HEK293 (cell line): ENCODE measurements at regions of chr16 and their contacts with region 1.

Region 1: DNA sequence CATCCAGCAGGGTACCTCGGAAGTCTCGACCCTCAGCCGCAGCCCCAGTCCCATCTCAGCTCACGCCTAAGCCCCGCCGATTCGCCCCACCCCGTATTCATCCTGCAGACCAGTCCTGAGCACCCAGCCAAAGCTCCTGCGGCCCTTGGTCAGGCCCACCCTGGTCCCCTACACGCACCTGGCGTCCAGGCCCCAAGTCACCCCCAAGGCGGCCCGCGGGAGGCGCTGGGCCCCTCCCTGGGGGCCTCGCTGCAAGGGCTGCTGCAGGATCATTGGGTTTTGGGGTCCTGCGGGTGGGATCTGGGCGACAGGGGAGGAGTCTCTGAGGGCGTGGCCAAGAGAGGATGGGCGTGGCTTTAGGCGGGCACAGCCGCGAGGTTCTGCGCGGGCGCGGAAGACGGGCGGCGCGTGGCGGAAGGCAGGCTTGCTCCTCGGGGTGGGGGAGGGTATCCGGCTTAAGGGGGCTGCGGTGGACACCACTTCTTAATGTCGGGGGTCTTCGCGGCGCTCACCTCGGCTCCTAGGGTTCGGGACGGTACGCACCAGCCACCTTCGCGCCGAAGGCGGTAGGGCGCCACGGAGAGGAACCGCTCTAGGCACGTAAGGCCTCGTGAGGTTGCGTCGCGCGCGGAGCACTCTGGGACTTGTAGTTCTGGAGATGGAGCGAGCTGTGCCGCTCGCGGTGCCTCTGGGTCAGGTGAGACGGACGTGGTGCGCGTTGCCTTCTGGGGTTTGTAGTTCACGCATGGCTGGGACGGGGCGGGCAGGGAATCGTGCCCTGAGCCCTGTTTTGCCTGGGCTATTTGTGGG is at the starts of genes HCFC1R1 and THOC6:
- H3K4me3 ChIP-seq: peak within 1 kb of the TSS; percentile 72
- H3K27ac ChIP-seq: peak within 1 kb of the TSS; percentile 85
- H3K4me1 ChIP-seq: peaks cover 27% of the 10 kb centered on the region
- CTCF ChIP-seq: no peak; the same call in 1 of the 2 replicates

Region 2: DNA sequence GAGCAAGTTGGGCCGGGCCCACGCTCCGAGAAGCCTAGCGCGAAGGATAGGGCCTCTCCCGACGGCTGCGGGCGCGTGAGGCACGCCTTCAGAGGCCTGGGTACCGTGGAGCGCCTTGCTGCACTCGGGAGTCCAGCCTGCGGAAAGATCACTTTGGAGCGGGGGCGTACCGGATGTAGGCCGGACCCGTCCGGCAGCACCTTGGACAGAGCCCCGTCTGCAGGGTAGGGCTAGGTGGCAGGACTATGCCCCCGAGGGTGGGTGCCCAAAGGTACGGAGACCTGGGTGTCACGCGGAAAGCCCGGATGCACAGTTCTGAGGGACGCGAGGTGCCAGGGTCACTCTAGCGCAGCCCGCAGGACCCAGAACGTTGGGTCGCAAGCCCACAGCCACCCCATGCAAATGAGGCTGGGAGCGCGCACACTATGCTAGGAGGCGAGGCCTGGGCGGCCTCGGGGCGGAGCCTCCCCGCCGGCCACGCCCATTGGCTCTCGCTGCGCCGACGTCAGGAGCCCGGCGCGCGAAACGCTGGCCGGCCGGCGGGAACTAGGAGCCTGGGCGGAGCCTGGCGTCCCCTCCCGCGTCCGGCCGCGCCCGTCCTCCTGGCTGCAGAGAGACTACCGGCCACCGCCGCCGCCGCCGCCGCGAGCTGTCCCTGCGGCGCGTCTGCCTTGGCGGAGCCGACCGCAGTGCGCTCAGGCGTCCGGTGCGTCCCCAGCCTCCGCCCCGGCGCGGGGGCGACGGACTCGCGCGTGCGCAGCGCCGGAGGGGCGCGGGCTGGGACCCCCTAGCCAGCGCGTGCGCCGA is 54.9 kb before region 1 on chr16 and contains the start of gene PAQR4:
- CTCF ChIA-PET with region 1: interaction called, 6 read pairs
- POLR2A ChIA-PET with region 1: interaction called, 17 read pairs
- H3K4me3 ChIP-seq: peak within 1 kb of the TSS; percentile 74
- H3K27ac ChIP-seq: peak within 1 kb of the TSS; percentile 80
- H3K4me1 ChIP-seq: peaks cover 12% of the 10 kb centered on the region
- CTCF ChIP-seq: no peak

Region 3: DNA sequence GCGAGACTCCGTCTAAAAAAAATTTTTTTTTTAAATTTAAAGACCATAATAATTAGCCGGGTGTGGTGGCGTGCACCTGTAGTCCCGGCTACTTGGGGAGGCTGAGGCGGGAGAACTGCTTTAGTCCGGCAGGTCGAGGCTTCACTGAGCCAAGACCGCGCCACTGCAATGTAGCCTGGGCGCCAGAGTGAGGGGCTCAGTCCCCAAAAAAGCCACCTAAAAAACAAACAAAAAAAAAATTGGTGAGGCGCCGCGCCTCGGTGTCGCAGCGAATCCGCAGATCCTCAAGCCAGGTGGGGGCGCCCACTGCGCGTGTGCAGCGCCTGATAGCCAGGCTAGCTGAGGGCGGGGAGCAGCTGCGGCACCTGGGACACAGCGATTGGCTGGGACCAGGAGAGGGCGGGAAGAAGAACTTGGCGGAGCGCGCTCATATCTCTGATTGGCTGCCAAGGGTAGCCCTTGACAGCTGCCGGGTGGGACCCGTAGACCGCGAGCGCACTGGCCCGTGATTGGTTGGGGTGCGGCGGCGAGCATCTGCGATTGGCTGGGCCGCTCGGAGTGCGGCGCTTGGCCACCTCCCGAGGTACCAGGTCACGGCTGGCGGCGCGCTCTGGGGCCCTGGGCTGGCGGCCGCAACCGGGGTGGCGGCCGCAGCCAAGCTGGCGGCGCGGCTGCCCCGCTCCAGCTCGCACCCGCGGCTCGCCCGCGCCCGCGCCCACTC is 20.1 kb before region 1 on chr16:
- CTCF ChIA-PET with region 1: interaction called, 149 read pairs
- POLR2A ChIA-PET with region 1: interaction called, 247 read pairs
- H3K4me3 ChIP-seq: peak overlapping the region; percentile 19
- H3K27ac ChIP-seq: no peak overlapping the region
- H3K4me1 ChIP-seq: no peaks in the 10 kb centered on the region
- CTCF ChIP-seq: peak; percentile 96

Region 4: GRCh38 chr16:3045357-3045728 is 21.5 kb after region 1 on chr16:
- CTCF ChIA-PET with region 1: interaction called, 87 read pairs
- POLR2A ChIA-PET with region 1: interaction called, 11 read pairs
- H3K4me3 ChIP-seq: peak overlapping the region; percentile 48
- H3K27ac ChIP-seq: no peak overlapping the region
- H3K4me1 ChIP-seq: no peaks in the 10 kb centered on the region
- CTCF ChIP-seq: no peak

Region 5: DNA sequence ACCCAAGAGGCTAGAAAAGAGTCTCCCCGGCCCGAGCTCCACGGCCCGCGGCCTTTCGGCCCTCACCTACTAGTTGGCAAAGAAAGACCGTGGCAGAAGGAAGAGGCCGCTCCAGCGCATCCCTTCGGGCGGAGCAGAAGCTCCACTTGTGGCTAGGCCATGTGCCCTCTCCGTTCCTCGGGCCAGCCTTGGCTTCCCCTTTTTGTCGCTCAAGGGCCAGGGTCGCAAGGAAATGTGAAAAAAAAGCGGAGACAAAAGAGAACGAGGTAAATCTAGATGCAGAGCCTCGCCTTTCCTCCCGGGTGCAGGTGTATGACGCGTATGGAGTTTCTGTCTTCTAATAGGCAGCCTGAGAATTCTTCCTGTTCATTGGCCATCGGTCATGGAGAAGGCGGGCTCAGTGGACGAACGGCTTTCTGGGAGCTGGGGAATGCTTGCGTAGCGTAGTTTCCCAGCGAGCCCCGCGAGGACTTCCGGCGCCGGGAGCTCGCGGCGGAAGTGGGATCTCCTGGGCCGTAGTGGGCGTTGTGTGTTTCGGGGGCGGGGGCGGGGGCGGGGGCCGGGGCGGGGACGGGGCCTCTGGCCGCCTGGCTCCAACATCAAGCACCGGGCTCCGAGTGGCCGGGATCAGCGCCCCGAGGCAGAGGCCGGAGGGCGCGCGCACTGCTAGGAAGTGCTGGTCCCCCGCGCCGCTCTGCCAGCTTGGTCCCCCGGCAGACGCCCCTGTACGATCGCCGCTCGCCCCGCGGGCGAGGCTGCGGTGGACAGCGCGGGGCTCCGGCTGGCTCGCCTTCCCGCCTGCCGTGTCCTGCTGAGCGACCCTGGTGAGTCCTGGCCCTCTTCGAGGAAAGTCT is 110.9 kb after region 1 on chr16 and contains the start of gene ZNF213:
- CTCF ChIA-PET with region 1: interaction called, 5 read pairs
- POLR2A ChIA-PET with region 1: interaction called, 13 read pairs
- H3K4me3 ChIP-seq: peak within 1 kb of the TSS; percentile 82
- H3K27ac ChIP-seq: peak within 1 kb of the TSS; percentile 90
- H3K4me1 ChIP-seq: peaks cover 3% of the 10 kb centered on the region; the same call in 1 of the 2 replicates
- CTCF ChIP-seq: 0 out of 2 replicates have a peak, but pooled peaks have one; percentile 1